PC-9 (cell line): ENCODE measurements at regions of chr11 and their contacts with region 1.

Region 1: GRCh38 chr11:1222491-1223345 is at the start of gene MUC5B:
- DNase-seq: peak; percentile 78 to 81
- H3K4me3 ChIP-seq: peak within 1 kb of the TSS; percentile 54
- H3K27ac ChIP-seq: no peak within 1 kb of the TSS
- H3K4me1 ChIP-seq: peaks cover 37% of the 10 kb centered on the region
- H3K27me3 ChIP-seq: no peaks in the 10 kb centered on the region
- CTCF ChIP-seq: no peak
- total RNA-seq, gene MUC5B: 2.1 and 3.3 TPM in 2 replicates

Region 2: GRCh38 chr11:1153951-1154493 is 68.7 kb before region 1 on chr11:
- CTCF ChIA-PET with region 1: no interaction called
- POLR2A ChIA-PET with region 1: no interaction called
- intact Hi-C with region 1: loop called (anchors 5 kb)
- DNase-seq: peak; percentile 90 to 94
- H3K4me3 ChIP-seq: peak overlapping the region; percentile 48; the same call in 1 of the 2 replicates
- H3K27ac ChIP-seq: peak overlapping the region; percentile 96
- H3K4me1 ChIP-seq: peaks cover 53% of the 10 kb centered on the region
- H3K27me3 ChIP-seq: no peaks in the 10 kb centered on the region
- CTCF ChIP-seq: no peak

Region 3: DNA sequence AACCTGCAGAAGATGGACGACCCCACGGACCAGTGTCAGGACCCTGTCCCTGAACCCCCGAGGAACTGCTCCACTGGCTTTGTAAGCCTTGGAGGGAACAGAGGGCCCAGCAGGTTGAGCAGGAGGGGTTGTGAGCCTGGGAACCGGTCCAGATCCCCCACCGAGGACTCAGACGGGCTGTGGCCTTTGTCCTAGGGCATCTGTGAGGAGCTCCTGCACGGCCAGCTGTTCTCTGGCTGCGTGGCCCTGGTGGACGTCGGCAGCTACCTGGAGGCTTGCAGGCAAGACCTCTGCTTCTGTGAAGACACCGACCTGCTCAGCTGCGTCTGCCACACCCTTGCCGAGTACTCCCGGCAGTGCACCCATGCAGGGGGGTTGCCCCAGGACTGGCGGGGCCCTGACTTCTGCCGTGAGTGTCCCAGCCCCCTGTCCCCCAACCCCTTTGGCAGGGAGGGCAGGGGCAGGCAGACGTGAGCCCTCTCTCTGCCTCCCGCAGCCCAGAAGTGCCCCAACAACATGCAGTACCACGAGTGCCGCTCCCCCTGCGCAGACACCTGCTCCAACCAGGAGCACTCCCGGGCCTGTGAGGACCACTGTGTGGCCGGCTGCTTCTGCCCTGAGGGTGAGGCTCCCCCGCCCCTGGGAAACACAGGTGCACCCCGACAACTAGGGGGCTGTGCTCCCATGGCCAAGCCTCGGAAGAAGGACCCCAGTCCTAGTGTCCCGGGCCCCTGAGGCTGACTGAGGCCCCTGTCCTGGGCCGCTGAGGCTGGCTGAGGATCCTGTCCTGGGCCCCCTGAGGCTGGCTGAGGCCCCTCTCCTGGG is 58.6 kb before region 1 on chr11:
- CTCF ChIA-PET with region 1: no interaction called
- POLR2A ChIA-PET with region 1: no interaction called
- intact Hi-C with region 1: no loop called
- DNase-seq: no peak
- H3K4me3 ChIP-seq: no peak overlapping the region
- H3K27ac ChIP-seq: no peak overlapping the region
- H3K4me1 ChIP-seq: no peaks in the 10 kb centered on the region
- H3K27me3 ChIP-seq: no peaks in the 10 kb centered on the region
- CTCF ChIP-seq: no peak

Region 4: DNA sequence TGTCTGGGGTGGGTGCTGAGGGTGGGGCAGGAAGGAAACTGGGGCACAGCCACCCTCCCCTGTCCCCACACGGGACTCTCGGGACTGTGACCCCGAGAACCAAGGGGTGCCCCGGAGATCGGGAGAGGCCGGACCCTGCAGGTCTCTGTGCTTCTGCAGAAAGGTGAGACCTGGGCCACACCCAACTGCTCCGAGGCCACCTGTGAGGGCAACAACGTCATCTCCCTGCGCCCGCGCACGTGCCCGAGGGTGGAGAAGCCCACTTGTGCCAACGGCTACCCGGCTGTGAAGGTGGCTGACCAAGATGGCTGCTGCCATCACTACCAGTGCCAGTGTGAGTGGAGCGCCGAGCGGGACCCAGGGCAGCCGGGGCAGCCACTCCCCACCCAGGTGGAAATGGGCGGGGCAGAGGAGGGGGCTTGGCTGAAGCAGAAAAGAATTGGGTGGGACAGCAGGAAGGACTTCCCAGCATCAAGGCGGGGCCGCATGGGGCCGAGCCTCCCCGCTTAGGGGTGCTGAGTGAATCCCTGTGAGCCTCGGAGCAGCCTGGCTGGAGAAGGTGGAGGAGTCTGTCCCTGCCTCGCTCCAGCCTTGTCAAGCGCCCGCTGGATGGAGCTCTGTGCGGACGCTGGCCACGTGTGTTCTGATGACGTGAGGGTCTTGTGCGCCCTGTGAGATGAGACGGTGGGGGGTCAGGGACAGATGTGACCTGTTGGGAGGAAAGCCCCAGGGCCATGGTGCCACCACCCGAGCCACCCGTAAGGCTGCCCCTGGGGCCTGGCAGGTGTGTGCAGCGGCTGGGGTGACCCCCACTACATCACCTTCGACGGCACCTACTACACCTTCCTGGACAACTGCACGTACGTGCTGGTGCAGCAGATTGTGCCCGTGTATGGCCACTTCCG is 29.1 kb before region 1 on chr11:
- CTCF ChIA-PET with region 1: no interaction called
- POLR2A ChIA-PET with region 1: no interaction called
- intact Hi-C with region 1: no loop called
- DNase-seq: no peak
- H3K4me3 ChIP-seq: no peak overlapping the region
- H3K27ac ChIP-seq: no peak overlapping the region
- H3K4me1 ChIP-seq: no peaks in the 10 kb centered on the region
- H3K27me3 ChIP-seq: peaks cover 6% of the 10 kb centered on the region; the same call in 1 of the 2 replicates
- CTCF ChIP-seq: no peak

Region 5: DNA sequence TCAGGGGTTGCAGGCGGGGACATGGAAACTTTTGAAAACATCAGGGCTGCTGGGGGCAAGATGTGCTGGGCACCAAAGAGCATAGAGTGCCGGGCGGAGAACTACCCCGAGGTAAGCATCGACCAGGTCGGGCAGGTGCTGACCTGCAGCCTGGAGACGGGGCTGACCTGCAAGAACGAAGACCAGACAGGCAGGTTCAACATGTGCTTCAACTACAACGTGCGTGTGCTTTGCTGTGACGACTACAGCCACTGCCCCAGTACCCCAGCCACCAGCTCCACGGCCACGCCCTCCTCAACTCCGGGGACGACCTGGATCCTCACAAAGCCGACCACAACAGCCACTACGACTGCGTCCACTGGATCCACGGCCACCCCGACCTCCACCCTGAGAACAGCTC is 19.6 kb after region 1 on chr11:
- CTCF ChIA-PET with region 1: no interaction called
- POLR2A ChIA-PET with region 1: no interaction called
- intact Hi-C with region 1: no loop called
- DNase-seq: no peak
- H3K4me3 ChIP-seq: no peak overlapping the region
- H3K27ac ChIP-seq: no peak overlapping the region
- H3K4me1 ChIP-seq: 0 out of 2 replicates have a peak, but pooled peaks cover 2% of the 10 kb centered on the region
- H3K27me3 ChIP-seq: no peaks in the 10 kb centered on the region
- CTCF ChIP-seq: no peak

Region 6: DNA sequence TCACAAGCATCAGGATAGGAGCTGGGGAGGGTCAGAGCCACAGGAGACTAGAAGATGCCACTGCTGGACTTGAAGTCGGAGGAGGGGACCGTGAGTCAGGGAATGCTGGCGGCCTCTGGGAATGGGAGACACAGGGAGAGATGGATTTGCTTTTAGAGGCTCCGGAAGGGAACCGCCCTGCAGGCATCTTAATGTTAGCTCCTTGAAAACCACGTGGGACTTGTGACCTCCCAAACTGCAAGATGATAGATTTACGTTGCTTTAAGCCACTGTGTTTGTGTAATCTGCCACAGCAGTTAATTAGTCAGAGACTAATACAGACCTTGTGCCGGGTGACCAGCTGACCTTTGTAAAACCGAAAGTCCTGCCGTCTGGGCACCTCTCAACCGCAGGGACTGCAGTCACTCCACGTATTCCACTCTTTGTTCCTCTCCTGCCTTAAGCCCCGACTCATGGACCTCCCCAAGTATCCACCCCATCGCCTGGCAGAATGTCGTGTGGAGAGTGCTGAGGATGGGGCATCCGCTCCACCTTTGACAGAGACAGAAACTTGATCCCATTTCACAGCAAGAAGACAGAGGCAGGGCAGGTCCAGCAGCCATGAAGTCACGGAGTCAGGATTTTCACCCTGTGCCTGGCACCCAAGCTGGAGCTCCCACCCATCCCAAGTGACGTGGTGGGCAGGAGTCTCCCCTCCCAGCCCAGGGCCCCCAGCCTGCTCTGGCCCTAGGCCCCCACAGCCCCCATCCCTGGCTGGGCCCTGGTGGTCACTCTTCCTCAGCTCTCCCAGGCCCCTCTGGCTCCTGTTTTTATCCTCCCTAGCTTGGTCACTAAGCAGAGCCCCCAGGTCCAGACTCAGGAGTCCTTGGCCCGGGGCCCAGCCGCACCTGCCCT is 560.4 kb after region 1 on chr11:
- CTCF ChIA-PET with region 1: no interaction called
- POLR2A ChIA-PET with region 1: interaction called, 10 read pairs
- intact Hi-C with region 1: no loop called
- DNase-seq: peak in 1 of 2 experiments; percentile 62
- H3K4me3 ChIP-seq: peak overlapping the region; percentile 24; the same call in 1 of the 2 replicates
- H3K27ac ChIP-seq: peak overlapping the region; percentile 54
- H3K4me1 ChIP-seq: peaks cover 35% of the 10 kb centered on the region
- H3K27me3 ChIP-seq: no peaks in the 10 kb centered on the region
- CTCF ChIP-seq: no peak